ENCODE measurements at regions of chr9 and their contacts with region 1.

Region 1: DNA sequence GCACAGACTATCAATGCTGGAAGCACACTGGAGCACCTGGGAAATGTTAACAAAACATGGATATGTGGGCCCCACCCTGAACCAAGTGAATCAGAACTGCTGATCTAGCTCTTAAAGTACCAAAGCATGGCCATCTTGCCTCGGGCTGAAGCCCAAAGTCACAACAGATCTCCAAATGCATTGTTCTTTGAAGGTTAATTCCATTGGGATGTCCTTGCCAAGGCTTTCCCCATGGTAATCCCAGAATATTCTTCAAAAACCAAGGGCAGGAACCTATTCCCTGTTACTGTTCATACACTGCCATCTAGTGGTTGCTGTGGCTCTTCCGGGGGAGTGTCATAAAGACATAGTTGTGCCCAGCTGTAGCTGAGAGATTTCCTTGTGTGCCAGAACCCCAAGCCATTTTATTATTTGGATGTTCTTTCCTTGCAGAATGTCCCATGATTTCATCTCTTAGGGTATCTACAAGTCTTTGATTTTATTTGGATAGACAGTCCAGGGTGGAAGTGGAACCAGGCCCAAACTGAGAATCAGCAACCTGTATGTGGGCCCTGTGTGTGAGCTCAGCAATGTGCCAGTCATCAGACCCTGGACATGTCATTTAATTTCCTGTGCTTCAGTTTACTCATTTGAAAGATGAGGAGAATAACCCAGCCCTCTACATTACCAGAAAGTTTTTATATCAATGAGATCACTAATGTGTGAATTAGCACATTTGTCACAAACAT is 290.0 kb downstream of the ACTL7B start:
- DNase-seq: peak; percentile 67
- H3K4me3 ChIP-seq: no peak overlapping the region
- H3K27ac ChIP-seq: no peak overlapping the region
- H3K4me1 ChIP-seq: no peaks in the 10 kb centered on the region
- H3K27me3 ChIP-seq: no peaks in the 10 kb centered on the region
- CTCF ChIP-seq: peak; percentile 87

Region 2: DNA sequence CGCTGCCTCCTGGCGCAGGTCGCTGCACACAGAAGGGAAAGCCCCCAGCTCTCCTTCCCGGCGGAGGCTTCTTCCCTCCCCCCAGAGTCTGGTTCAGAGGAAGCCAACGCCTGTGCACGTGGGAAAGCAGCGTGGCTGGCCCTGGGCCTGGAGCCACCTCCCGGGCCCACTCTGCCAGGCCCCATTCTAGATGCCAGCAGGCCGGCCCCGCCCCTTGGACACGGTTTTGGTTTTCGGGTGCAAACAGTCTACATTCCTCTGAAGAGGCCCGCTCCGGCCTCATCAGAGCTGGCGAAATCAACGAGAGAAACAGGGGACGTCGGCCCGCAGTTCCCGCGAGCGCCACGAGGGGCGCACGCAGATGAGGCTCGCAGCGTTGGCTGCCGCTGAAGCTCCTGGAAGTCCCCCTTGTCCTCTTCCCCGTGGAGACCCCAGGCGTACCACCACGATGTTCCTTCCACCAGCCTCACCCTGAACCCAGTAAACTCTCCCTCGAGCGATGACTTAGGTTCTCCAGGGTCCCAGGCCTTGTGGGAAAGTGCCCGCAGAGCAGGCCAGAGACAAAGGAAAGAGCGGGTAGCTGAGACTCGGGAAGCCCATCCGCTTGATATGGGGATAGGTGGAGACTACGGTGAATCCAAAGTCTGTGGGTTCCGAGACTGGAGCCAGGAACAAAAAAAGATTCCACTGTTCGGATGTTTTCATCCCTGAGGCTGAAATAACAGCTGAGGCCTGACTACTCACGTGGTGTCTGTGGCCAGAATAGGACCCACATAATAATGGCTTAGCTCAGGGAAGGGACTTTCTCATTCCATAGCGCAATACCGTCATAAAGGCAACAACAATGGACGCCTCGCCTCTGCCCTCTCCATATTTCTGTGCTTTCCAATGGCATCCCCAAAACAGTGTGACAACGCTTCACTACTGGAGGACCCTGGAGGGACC is 1140.4 kb before region 1 on chr9:
- intact Hi-C with region 1: loop called (anchors 5 kb)
- DNase-seq: peak; percentile 75
- H3K4me3 ChIP-seq: peak overlapping the region; percentile 30
- H3K27ac ChIP-seq: no peak overlapping the region
- H3K4me1 ChIP-seq: no peaks in the 10 kb centered on the region
- H3K27me3 ChIP-seq: no peaks in the 10 kb centered on the region
- CTCF ChIP-seq: peak; percentile 96

Region 3: GRCh38 chr9:107465467-107466451 is 1100.1 kb before region 1 on chr9:
- intact Hi-C with region 1: loop called (anchors 1 kb)
- DNase-seq: peak; percentile 75
- H3K4me3 ChIP-seq: peak overlapping the region; percentile 63
- H3K27ac ChIP-seq: peak overlapping the region; percentile 27
- H3K4me1 ChIP-seq: no peaks in the 10 kb centered on the region
- H3K27me3 ChIP-seq: peaks cover 7% of the 10 kb centered on the region
- CTCF ChIP-seq: peak; percentile 87

Region 4: DNA sequence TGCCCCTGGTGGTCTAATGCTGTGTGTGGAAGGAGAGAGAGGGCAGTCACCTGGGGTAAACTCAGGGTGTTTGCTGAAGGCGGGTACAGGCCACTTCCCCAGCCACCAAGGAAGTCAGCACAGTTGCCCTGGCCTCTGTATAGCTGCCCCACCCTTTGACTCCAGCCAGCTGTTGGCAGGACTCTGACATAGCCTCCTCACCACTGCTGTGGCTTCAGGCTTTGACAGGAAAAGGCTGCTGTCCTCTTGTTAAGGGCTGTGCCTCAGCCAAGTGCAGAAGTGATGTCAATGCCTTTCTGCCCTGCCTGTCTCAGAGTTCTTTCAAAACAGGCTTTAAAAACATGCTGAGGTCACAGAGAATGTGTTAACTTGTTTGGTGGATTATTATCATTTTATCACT is 589.0 kb before region 1 on chr9:
- intact Hi-C with region 1: no loop called
- DNase-seq: peak; percentile 88
- H3K4me3 ChIP-seq: no peak overlapping the region
- H3K27ac ChIP-seq: peak overlapping the region; percentile 65
- H3K4me1 ChIP-seq: peaks cover 5% of the 10 kb centered on the region
- H3K27me3 ChIP-seq: no peaks in the 10 kb centered on the region
- CTCF ChIP-seq: no peak

Region 5: GRCh38 chr9:108761655-108762347 is 196.0 kb after region 1 on chr9:
- intact Hi-C with region 1: loop called (anchors 5 kb)
- DNase-seq: peak; percentile 65
- H3K4me3 ChIP-seq: no peak overlapping the region
- H3K27ac ChIP-seq: no peak overlapping the region
- H3K4me1 ChIP-seq: no peaks in the 10 kb centered on the region
- H3K27me3 ChIP-seq: no peaks in the 10 kb centered on the region
- CTCF ChIP-seq: peak; percentile 88